ENCODE measurements at regions of chr10 and their contacts with region 1.

Region 1: DNA sequence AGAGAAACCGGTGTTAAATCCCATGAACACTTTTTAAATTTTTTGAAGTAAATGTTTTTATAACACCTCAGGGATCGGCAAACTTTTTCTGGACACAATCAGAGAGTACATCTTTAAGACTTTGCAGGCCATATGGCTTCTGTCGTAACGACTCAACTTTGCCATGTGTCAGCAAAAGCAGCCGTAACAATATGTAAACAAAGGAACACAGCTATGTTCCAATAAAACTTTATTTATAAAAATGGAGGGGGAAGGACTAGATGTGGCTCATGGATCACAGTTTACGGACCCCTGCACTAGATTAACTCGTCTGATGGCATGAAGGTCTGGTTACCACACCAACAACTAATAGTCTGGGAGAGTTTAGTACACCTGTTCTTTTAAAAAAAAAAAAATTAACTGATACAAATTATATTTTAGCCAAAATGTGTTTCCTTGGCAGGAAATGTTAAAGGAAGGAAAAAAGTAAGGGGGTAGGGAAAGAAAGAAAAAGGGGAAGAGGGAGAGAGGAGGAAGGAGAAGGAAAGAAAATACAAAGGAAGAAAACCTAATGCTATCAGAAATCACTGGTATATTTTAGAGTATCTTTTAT is 50.2 kb downstream of the ABI1 start:
- DNase-seq: no peak
- ATAC-seq: no peak
- H3K4me3 ChIP-seq: no peak overlapping the region
- H3K4me3 Mint-ChIP-seq: no peak overlapping the region
- H3K27ac ChIP-seq: no peak overlapping the region
- H3K27ac Mint-ChIP-seq: no peak overlapping the region
- H3K4me1 ChIP-seq: peaks cover 14 to 16% of the 10 kb centered on the region in 2 donors
- H3K4me1 Mint-ChIP-seq: peaks cover 52% of the 10 kb centered on the region
- H3K27me3 ChIP-seq: no peaks in the 10 kb centered on the region
- H3K27me3 Mint-ChIP-seq: no peaks in the 10 kb centered on the region
- CTCF ChIP-seq: no peak

Region 2: GRCh38 chr10:26780793-26781601 is 29.5 kb before region 1 on chr10:
- CTCF ChIA-PET with region 1: interaction called, 4 read pairs
- POLR2A ChIA-PET with region 1: no interaction called
- intact Hi-C with region 1: loop called (anchors 5 kb)
- DNase-seq: peak; percentile 73
- ATAC-seq: peak; percentile 95
- H3K4me3 ChIP-seq: peak overlapping the region in 2 of 5 experiments; percentile 12 to 15
- H3K4me3 Mint-ChIP-seq: peak overlapping the region; percentile 71
- H3K27ac ChIP-seq: peak overlapping the region; percentile 69 to 81
- H3K27ac Mint-ChIP-seq: peak overlapping the region; percentile 78
- H3K4me1 ChIP-seq: peaks cover 42 to 56% of the 10 kb centered on the region in 2 donors
- H3K4me1 Mint-ChIP-seq: peaks cover 85% of the 10 kb centered on the region
- H3K27me3 ChIP-seq: no peaks in the 10 kb centered on the region
- H3K27me3 Mint-ChIP-seq: no peaks in the 10 kb centered on the region
- CTCF ChIP-seq: no peak